ENCODE measurements at regions of chr4 and their contacts with region 1.

Region 1: DNA sequence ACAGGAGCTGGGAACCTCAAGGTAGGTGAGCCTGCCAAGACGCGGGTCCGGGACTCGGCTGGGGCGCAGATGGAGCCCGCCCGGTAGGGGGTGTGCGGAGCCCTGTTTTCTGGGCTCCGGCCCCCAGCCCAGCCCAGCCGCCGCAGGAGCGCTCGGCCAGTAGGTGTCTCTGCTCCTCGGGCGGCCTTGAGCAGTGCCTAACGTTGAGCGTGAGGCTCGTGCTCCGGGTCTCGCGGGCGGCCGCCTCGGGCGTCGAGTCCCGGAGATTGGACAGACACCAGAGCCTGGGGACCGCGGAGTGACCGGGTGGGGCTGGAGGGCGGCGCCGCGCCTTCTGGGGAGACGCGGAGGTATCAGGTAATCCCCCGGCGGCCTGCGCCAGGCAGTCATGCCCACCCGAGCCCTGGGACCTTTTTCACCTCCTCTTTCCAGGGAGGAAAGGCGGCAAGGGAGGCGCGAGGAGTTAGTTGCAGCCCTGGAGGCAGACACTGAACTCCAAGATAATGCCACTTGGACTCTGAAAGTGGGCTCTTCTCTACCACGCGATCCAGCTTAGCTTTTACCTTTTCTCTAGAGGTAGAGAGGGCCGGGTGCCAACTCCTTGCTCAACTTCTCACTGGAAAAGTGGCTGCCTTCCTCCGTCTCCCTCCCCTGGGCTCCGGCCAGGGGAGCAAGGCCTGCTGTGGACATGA is 14.5 kb upstream of the FGG start:
- DNase-seq: peak; percentile 81 to 82
- H3K4me3 ChIP-seq: peak overlapping the region in 2 of 3 donors; percentile 3 to 33
- H3K27ac ChIP-seq: peak overlapping the region in 1 of 3 donors; percentile 53
- H3K4me1 ChIP-seq: peaks cover 3 to 6% of the 10 kb centered on the region in 2 donors
- H3K27me3 ChIP-seq: no peaks in the 10 kb centered on the region
- CTCF ChIP-seq: peak; percentile 48 to 75 (median 54)
- POLR2A ChIP-seq: no peak

Region 2: GRCh38 chr4:154452798-154453346 is 174.1 kb before region 1 on chr4:
- intact Hi-C with region 1: no loop called
- DNase-seq: no peak
- H3K4me3 ChIP-seq: no peak overlapping the region
- H3K27ac ChIP-seq: no peak overlapping the region
- H3K4me1 ChIP-seq: no peaks in the 10 kb centered on the region
- H3K27me3 ChIP-seq: no peaks in the 10 kb centered on the region
- CTCF ChIP-seq: no peak
- POLR2A ChIP-seq: no peak

Region 3: GRCh38 chr4:154507153-154507552 is 119.8 kb before region 1 on chr4:
- intact Hi-C with region 1: no loop called
- DNase-seq: peak; percentile 82 to 85
- H3K4me3 ChIP-seq: no peak overlapping the region
- H3K27ac ChIP-seq: peak overlapping the region; percentile 78 to 94 (median 86)
- H3K4me1 ChIP-seq: peaks cover 6 to 21% of the 10 kb centered on the region in 2 donors
- H3K27me3 ChIP-seq: no peaks in the 10 kb centered on the region
- CTCF ChIP-seq: no peak
- POLR2A ChIP-seq: no peak

Region 4: DNA sequence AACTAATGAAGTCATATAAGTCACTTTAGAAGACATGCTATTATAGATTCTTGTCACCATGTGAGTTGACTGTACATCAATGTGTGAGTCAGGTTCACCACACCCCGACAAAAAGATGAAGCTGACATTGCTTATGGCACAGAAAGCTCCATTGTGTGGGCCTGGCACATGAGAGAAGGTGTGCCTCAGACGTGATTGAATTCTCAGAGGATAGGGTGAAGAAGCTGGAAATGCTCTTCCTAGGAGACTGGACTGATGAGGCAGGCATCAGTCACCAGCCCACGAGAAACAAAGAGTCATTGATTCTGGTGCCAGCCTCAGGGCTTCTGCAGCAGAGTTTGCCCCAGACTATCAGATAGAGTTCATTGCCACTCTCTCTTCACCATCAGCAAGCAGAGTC is 80.9 kb after region 1 on chr4:
- intact Hi-C with region 1: no loop called
- DNase-seq: no peak
- H3K4me3 ChIP-seq: no peak overlapping the region
- H3K27ac ChIP-seq: no peak overlapping the region
- H3K4me1 ChIP-seq: no peaks in the 10 kb centered on the region
- H3K27me3 ChIP-seq: no peaks in the 10 kb centered on the region
- CTCF ChIP-seq: no peak
- POLR2A ChIP-seq: no peak

Region 5: GRCh38 chr4:154779362-154779947 is 152.5 kb after region 1 on chr4:
- intact Hi-C with region 1: loop called (anchors 10 kb)
- DNase-seq: no peak
- H3K4me3 ChIP-seq: no peak overlapping the region
- H3K27ac ChIP-seq: no peak overlapping the region
- H3K4me1 ChIP-seq: no peaks in the 10 kb centered on the region
- H3K27me3 ChIP-seq: no peaks in the 10 kb centered on the region
- CTCF ChIP-seq: peak in 4 of 6 experiments; percentile 29 to 75 (median 64)
- POLR2A ChIP-seq: no peak